ENCODE measurements at regions of chr9 and their contacts with region 1.

Region 1: DNA sequence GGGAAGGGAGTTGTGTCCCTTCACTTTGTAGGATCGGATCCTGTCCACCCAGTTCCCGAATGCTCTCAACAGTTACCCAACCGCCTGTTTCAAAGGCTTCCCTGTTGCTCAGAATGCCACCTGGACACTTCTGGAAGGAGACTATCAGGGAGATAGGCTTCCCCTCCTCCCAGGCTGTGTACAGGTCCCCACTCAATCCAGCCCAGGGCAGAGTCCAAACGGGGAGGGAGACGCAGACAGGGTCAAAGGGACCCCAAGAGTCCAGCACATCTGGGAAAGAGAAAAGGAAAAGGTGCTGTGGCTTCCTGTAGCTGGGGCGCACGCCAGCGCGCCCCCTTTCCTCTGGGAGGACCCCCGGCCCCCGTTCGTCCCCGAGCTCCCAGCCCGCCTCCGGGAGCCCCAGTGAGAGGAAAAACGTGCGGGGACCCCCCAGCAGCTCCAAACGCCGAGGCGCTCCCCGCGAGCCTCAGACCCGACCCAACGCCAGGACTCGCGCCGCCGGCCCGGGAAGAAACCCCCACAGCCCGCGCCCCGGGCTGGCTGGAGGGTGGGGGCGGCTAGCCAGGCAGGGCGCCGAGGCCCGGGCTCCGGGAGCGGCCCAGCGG is 639 bp downstream of the SURF4 start:
- DNase-seq: peak; percentile 58
- ATAC-seq: peak; percentile 3
- H3K4me3 Mint-ChIP-seq: peak overlapping the region; percentile 95
- H3K27ac Mint-ChIP-seq: peak overlapping the region; percentile 100
- H3K4me1 Mint-ChIP-seq: peaks cover 41% of the 10 kb centered on the region
- H3K27me3 Mint-ChIP-seq: peaks cover 2% of the 10 kb centered on the region

Region 2: DNA sequence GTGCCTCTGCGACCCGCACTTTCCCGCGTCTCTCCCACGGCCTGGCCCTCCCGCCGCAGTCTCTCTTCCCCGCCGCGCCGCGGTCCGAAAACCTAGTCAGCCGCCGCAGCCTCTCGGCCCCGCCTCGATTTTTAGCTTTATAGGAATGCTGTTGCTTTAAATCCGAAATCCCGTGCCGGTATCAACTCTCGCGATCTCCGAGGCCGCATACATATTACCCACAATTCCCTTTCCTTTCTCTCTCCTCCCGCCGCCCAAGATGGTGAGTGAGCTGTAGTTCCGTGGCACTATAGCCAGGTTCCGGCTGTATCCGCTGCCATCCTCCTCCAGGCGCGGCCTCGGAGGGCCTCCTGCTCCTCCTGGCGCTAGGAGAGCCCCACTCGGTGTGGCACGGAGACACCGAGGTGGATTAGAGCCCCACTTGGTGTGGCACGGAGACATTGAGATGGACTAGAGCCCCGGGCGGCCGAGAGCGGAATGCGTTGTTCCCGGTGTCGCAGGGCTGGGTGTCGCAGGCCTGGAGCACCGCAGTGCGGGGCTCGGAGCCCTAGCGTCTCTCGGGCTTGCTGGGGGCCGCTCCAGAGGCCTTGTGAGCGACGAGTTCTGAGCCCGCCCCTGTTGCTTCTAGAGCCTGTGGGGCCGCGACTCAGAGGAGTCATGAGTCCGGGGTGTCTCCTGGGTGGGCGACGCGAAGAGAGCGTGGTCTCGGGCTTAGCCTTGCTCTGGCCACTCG is 27.1 kb before region 1 on chr9 and contains the starts of genes MED22 and RPL7A:
- CTCF ChIA-PET with region 1: interaction called, 47 read pairs
- DNase-seq: peak; percentile 96
- ATAC-seq: peak; percentile 81
- H3K4me3 Mint-ChIP-seq: peak within 1 kb of the TSS; percentile 94
- H3K27ac Mint-ChIP-seq: peak within 1 kb of the TSS; percentile 89
- H3K4me1 Mint-ChIP-seq: peaks cover 48% of the 10 kb centered on the region
- H3K27me3 Mint-ChIP-seq: no peaks in the 10 kb centered on the region
- total RNA-seq, gene MED22: 28.8 to 35.9 TPM
- total RNA-seq, gene RPL7A: 1,729 to 2,113 TPM

Region 3: DNA sequence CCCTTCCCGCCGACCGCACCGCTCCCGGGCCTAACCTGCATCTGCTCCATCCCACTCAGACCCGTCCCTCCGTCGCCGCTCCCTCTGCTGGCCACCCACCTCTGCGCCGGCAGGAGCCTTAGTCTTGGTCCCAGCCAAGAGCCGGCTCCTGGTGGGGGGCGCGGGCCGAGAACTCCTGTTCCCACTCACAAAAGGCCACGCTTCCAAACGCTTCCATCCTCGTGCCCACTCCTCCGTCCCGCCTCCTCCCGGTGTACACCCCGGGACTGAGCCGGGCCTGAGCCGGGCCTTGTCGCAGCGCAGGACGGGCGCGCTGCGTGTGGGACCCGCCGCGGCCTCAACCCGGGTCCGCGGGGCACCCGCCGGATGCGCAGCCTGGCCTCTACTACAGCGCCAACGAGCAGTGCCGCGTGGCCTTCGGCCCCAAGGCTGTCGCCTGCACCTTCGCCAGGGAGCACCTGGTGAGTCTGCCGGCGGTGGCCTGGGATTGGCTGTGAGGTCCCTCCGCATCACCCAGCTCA is 54.5 kb after region 1 on chr9:
- CTCF ChIA-PET with region 1: no interaction called
- DNase-seq: no peak
- ATAC-seq: peak; percentile 20
- H3K4me3 Mint-ChIP-seq: no peak overlapping the region
- H3K27ac Mint-ChIP-seq: no peak overlapping the region
- H3K4me1 Mint-ChIP-seq: peaks cover 9% of the 10 kb centered on the region
- H3K27me3 Mint-ChIP-seq: peaks cover 23% of the 10 kb centered on the region

Measured in activated CD8-positive, alpha-beta memory T cell treated with anti-CD3 and anti-CD28 coated beads, Interleukin-2, amount 10 ng/mL, durations not matched to agents 7 days and 5 days (primary cell).